ENCODE measurements at regions of chr1 and their contacts with region 1.

Region 1: DNA sequence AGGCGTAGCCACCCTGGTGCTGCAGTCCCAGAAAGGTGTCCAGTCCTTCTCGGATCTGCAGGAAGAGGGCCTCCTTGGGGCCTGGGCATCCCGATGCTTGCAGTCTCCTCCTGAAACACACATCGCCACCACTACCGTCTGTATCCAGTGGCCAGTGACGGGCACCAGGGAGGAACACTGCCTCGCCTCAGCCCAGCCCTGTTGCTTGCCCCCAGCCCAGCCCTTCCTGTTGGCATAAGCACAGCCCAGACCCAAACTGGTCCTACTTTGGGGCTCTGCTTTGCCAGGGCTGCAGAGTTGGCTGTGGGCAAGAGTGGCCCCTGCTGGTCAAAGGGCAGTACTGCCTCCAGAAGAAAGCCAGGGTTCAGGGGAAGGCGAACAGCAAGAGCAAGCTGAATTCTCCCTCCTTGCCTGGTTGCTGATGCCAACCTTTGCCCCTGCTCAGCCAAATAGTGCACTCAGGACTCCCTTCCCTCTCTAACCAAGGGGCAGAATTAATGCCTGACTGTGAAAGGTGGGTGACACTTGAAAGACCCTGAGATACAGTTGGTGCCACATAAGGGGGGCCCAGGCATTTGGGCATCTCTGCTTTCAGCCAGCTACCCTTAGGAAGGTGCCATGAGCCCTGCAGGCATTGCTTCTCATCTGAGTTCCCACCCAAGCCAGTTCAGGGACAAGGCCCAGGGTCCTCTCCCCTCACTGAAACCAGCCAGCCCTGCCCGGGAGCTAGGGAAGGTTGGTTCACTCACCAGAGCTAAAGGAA is 11.1 kb upstream of the ARHGEF2 start:
- DNase-seq: peak; percentile 70 to 82 (median 77)
- H3K4me3 ChIP-seq: peak overlapping the region; percentile 18
- H3K27ac ChIP-seq: no peak overlapping the region
- H3K4me1 ChIP-seq: no peaks in the 10 kb centered on the region
- H3K27me3 ChIP-seq: no peaks in the 10 kb centered on the region
- CTCF ChIP-seq: peak; percentile 87 to 98 (median 97)
- EP300 ChIP-seq: no peak
- POLR2A ChIP-seq: no peak

Region 2: DNA sequence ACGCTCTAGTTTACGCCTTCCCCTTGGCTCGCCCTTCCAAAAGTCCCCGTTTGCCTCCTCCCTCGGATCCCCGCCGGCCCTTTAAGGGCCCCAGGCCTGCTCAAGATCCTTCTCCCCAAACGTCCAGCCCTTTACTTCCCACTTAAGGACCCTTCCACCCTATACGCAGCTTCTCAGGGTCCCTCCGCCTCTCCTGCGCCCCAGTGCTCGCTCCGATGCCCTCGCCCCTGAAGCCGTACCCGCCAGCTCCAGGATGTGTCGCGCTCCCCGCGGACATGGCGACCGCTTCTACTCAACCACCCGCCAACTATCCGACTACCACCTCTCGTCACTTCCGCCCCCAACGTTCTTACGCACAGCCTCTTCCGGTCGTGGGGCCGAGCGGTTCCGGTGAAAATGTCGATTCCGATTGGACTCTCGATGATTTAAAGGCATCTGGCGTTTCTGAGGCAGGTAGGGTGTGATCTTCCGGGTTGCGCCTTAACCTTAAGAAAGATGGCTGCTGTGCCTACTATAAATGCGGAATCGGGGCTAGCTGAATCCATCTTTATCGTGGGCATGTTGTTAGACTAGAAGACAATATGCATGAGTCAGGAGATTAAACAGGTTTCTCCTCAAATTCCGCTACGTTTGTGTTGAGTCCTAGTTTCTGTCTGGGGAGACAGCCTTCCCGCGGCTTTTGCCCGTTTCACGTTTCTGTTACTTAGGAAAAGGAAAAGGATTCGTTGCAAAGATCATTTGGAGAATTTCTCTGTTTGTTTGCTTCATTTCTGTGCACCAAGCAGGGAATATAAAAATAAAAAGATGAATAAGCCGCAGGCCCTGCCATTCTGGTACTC is 55.1 kb before region 1 on chr1 and contains the start of gene KHDC4:
- intact Hi-C with region 1: loop called in 2 of 4 experiments (anchors 2 kb)
- DNase-seq: peak; percentile 94 to 96 (median 94)
- H3K4me3 ChIP-seq: peak within 1 kb of the TSS; percentile 88
- H3K27ac ChIP-seq: peak within 1 kb of the TSS; percentile 75 to 90
- H3K4me1 ChIP-seq: peaks cover 10% of the 10 kb centered on the region
- H3K27me3 ChIP-seq: no peaks in the 10 kb centered on the region
- CTCF ChIP-seq: peak in 2 of 3 donors; percentile 13 to 29
- EP300 ChIP-seq: peak; percentile 49
- POLR2A ChIP-seq: peak; percentile 100
- total RNA-seq, gene KHDC4: 38.1 to 61.1 (median 46.4) TPM

Region 3: GRCh38 chr1:155940531-155940992 is 48.9 kb before region 1 on chr1:
- intact Hi-C with region 1: loop called in 3 of 4 experiments (anchors 2 to 5 kb)
- DNase-seq: peak in 4 of 5 donors; percentile 42 to 61 (median 53)
- H3K4me3 ChIP-seq: no peak overlapping the region
- H3K27ac ChIP-seq: peak overlapping the region in 1 of 2 donors; percentile 66
- H3K4me1 ChIP-seq: peaks cover 6% of the 10 kb centered on the region
- H3K27me3 ChIP-seq: no peaks in the 10 kb centered on the region
- CTCF ChIP-seq: no peak
- EP300 ChIP-seq: no peak
- POLR2A ChIP-seq: no peak

Measured in ovary (tissue), 10 donors.